ENCODE measurements at regions of chr7 and their contacts with region 1.

Region 1: DNA sequence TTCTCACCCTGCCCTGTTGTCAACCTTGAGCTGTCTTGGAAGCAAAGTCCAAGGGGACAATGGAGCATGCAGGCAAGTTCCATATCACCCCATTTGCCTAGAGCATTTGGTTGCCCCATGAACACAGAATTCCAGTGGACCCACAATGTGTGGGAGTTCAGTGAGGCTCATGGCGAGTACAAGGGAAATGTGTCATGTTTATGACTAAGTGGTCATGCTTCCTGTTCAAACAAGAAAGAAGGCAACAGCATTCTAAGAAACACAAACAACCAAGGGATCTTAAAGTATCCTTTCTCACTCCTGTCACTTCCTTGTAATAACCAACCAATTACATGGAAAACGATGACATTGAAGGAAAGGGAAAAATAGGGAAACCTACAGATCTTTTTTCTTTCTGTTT is 513.0 kb downstream of the INHBA start:
- DNase-seq: peak; percentile 97
- H3K4me3 ChIP-seq: no peak overlapping the region
- H3K27ac ChIP-seq: peak overlapping the region; percentile 100
- H3K4me1 ChIP-seq: peaks cover 42% of the 10 kb centered on the region
- H3K27me3 ChIP-seq: no peaks in the 10 kb centered on the region
- CTCF ChIP-seq: no peak
- POLR2A ChIP-seq: peak; percentile 62

Region 2: DNA sequence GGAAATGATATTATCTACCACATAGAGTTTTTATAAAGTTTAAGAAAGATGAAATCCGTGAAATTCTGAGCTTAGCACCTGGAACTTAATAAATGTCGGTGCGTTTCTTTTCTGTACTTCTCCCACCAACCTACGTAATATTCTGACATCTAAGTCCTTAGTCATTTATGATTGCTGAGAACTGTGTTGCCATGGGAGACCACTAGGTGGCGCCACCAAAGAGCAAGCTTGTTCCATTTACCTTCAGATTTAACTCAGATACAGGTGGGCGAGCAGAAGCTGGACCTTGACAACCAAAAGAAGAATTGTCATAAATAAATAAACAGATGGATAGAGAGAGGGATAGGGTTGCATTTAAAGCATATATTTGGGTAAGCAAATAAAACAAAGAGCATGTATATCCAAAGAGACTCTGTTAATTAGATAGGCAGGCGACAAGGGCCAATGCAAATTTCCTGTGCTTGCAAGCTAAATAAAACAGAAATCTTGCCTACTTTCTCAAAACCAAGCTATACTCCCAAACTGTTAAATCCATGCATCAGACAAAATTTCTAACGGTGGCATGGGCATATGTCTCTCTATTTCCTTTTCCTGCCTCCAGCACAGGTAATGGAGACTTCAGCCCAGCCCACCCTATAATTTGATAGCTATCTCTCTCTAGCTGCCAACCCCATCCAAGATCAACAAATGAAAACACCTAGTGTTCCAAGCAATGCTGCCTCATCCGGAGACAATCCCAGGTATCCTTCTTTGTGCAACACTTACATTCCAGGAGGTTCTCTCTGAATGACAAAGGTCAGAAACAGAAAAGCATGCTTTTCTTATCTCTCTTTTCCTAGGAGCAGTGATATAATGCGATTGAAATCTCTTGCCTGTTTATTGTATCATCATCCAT is 186.6 kb before region 1 on chr7:
- CTCF ChIA-PET with region 1: interaction called, 20 read pairs
- POLR2A ChIA-PET with region 1: no interaction called
- dilution Hi-C with region 1: no loop called
- intact Hi-C with region 1: loop called (anchors 1 kb)
- DNase-seq: peak; percentile 80
- H3K4me3 ChIP-seq: no peak overlapping the region
- H3K27ac ChIP-seq: no peak overlapping the region
- H3K4me1 ChIP-seq: no peaks in the 10 kb centered on the region
- H3K27me3 ChIP-seq: no peaks in the 10 kb centered on the region
- CTCF ChIP-seq: peak; percentile 73 to 77
- POLR2A ChIP-seq: no peak

Region 3: GRCh38 chr7:41097501-41097900 is 92.4 kb before region 1 on chr7:
- CTCF ChIA-PET with region 1: no interaction called
- POLR2A ChIA-PET with region 1: no interaction called
- dilution Hi-C with region 1: no loop called
- intact Hi-C with region 1: no loop called
- DNase-seq: no peak
- H3K4me3 ChIP-seq: no peak overlapping the region
- H3K27ac ChIP-seq: no peak overlapping the region
- H3K4me1 ChIP-seq: no peaks in the 10 kb centered on the region
- H3K27me3 ChIP-seq: no peaks in the 10 kb centered on the region
- CTCF ChIP-seq: no peak
- POLR2A ChIP-seq: no peak

Region 4: GRCh38 chr7:41224063-41224806 is 34.4 kb after region 1 on chr7:
- CTCF ChIA-PET with region 1: interaction called, 3 read pairs
- POLR2A ChIA-PET with region 1: no interaction called
- dilution Hi-C with region 1: no loop called
- intact Hi-C with region 1: loop called (anchors 1 kb)
- DNase-seq: peak; percentile 56
- H3K4me3 ChIP-seq: no peak overlapping the region
- H3K27ac ChIP-seq: peak overlapping the region; percentile 23
- H3K4me1 ChIP-seq: peaks cover 14% of the 10 kb centered on the region
- H3K27me3 ChIP-seq: no peaks in the 10 kb centered on the region
- CTCF ChIP-seq: no peak
- POLR2A ChIP-seq: no peak

Region 5: DNA sequence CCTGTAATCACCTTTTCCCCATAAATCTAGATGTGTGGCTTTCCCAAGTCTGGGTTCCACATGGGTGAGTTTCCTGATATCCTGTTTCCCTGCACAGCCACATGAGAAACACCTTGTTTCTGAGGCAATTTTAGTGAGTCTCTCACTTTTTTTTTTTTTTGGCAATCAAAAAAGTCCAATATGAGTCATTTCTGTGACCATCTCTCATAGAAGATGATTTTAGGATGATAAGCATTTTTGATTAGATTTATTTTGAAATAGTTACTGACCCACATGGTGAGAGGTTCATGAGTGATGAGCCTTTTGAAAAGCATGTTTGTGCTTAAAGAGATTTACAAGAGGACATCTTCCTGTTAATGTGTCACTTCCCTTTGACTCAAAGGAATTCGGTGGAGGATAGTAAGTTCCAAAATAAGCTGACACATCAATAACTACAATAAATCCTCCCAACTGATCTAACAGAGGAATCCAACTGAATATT is 49.0 kb after region 1 on chr7:
- CTCF ChIA-PET with region 1: no interaction called
- POLR2A ChIA-PET with region 1: no interaction called
- dilution Hi-C with region 1: no loop called
- intact Hi-C with region 1: no loop called
- DNase-seq: peak; percentile 34
- H3K4me3 ChIP-seq: no peak overlapping the region
- H3K27ac ChIP-seq: no peak overlapping the region
- H3K4me1 ChIP-seq: peaks cover 15% of the 10 kb centered on the region
- H3K27me3 ChIP-seq: no peaks in the 10 kb centered on the region
- CTCF ChIP-seq: no peak
- POLR2A ChIP-seq: no peak

Region 6: GRCh38 chr7:41573018-41573417 is 383.2 kb after region 1 on chr7:
- CTCF ChIA-PET with region 1: interaction called, 3 read pairs
- POLR2A ChIA-PET with region 1: interaction called, 3 read pairs
- dilution Hi-C with region 1: no loop called
- intact Hi-C with region 1: loop called (anchors 1 kb)
- DNase-seq: peak; percentile 84
- H3K4me3 ChIP-seq: no peak overlapping the region
- H3K27ac ChIP-seq: peak overlapping the region; percentile 96
- H3K4me1 ChIP-seq: peaks cover 48% of the 10 kb centered on the region
- H3K27me3 ChIP-seq: no peaks in the 10 kb centered on the region
- CTCF ChIP-seq: no peak
- POLR2A ChIP-seq: peak; percentile 33

Measured in endothelial cell of umbilical vein (primary cell).